CD8-positive, alpha-beta T cell (primary cell): ENCODE measurements at regions of chr5 and their contacts with region 1.

Region 1: DNA sequence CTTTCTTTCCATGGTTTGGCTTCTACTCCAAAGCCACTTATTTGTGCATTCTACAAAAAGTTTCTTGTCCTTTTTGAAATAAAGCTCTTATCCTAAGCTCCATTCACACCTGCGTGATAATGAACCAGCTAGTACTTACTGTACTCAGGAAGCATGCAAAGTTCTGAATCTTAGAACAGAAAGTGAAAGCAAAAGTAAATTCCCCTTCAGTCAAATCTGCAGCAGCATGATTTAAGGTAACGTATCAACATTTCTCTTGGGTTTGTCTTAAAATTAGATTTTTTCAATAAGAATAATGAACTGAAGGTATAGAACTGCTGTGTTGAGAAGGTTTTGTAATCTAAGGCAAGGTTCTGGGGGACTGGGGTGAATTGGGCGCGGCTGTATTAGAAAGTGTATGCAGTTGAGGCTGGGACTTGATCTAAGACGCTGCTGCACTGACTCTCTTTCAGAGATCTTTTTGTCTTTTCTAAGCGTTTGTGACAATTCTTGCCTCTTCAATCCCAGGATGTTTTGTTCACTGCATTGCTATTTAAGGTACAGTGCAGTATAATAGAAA is at the start of gene ERAP2:
- DNase-seq: peak in 2 of 9 experiments; percentile 63 to 79
- ATAC-seq: peak; percentile 80
- H3K4me3 ChIP-seq: peak within 1 kb of the TSS; percentile 74 to 76
- H3K4me3 Mint-ChIP-seq: peak within 1 kb of the TSS; percentile 96
- H3K27ac ChIP-seq: peak within 1 kb of the TSS; percentile 75 to 78
- H3K27ac Mint-ChIP-seq: peak within 1 kb of the TSS; percentile 95
- H3K4me1 ChIP-seq: peaks cover 38% of the 10 kb centered on the region
- H3K4me1 Mint-ChIP-seq: peaks cover 71% of the 10 kb centered on the region
- H3K27me3 ChIP-seq: no peaks in the 10 kb centered on the region
- H3K27me3 Mint-ChIP-seq: no peaks in the 10 kb centered on the region
- CTCF ChIP-seq: no peak
- total RNA-seq, gene ERAP2: 46.5 to 49.9 TPM

Region 2: DNA sequence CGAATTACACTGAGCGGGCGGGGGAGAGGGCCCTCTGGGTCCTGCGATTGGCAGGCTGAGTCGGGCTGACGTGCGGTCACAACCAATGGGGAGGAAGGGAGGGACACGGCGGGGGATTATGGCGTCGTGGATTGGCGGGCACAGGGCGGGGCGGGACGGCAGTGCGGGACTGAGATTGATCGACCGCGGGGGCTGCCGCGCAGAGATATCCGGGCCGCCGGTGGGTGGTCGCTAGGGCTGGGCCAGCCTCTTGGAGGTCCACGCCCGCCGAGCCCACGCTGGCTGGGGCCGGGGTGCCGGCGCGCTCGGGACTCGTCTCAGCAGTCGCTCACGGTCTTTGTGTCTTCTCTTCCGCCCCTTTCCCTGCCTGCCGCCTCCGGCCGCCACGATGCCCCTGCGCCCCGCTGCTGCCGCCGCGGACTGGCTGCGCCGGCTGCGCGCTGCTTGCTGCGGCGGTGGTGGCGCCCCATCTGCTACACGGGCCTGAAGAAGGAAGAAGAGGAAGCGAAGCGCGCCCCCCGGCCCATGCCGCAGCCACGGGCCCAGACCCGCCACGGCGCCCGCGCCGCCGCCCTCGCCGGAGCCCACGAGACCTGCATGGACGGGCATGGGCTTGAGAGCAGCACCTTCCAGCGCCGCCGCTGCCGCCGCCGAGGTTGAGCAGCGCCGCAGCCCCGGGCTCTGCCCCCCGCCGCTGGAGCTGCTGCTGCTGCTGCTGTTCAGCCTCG is 1897.3 kb after region 1 on chr5 and contains the start of gene RGMB:
- CTCF ChIA-PET with region 1: no interaction called
- POLR2A ChIA-PET with region 1: no interaction called
- intact Hi-C with region 1: loop called in 1 of 2 experiments (anchors 5 kb)
- DNase-seq: peak; percentile 71 to 92 (median 89)
- ATAC-seq: peak; percentile 86
- H3K4me3 ChIP-seq: peak within 1 kb of the TSS; percentile 69 to 70
- H3K4me3 Mint-ChIP-seq: peak within 1 kb of the TSS; percentile 95
- H3K27ac ChIP-seq: peak within 1 kb of the TSS; percentile 37 to 53
- H3K27ac Mint-ChIP-seq: peak within 1 kb of the TSS; percentile 87
- H3K4me1 ChIP-seq: peaks cover 41% of the 10 kb centered on the region
- H3K4me1 Mint-ChIP-seq: peaks cover 56% of the 10 kb centered on the region
- H3K27me3 ChIP-seq: peaks cover 0 to 12% of the 10 kb centered on the region in 2 experiments
- H3K27me3 Mint-ChIP-seq: peaks cover 24% of the 10 kb centered on the region
- CTCF ChIP-seq: no peak
- total RNA-seq, gene RGMB: 5.8 to 6.6 TPM